Breast epithelium (tissue), 4 donors: ENCODE measurements at regions of chr1 and their contacts with region 1.

Region 1: DNA sequence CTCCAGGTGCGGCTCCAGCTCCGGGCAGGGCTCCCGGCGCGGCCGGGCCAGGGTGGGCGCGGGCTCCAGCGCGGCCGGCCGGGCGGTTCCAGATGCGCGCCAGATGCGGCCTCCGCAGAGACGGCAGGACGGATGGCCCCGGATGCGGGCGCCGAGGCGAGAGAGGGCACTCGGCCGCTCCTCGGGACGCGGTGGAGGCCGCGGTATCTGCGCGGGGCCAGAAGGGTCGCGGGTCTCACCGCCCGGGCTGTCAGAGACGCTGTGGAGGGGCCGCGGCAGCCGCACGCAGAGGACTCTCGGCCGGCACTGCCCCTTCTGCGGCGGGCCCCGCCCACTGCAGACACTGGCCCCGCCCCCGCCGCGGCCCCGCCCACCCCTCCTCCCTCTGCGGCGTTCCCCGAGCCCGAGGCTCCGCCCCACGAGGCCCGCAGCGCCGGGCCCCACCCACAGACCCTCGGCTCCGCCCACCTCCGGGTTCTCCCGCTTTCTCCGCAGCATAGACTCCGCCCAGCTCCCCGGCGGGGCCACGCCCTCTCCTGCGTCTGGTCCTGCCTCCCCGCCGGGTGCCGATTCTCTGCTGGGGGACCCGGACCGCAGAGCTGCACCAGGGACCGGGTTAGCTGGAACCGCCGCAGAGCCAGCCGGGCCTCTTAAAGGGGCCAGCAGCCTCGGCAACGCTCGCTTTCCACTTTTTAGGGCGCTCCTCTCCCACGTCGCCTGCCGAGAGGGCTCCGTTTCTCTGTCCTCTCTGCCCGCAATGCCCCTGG is at the start of gene IFFO2:
- DNase-seq: peak; percentile 97 to 98
- H3K4me3 ChIP-seq: peak within 1 kb of the TSS; percentile 71 to 84 (median 76)
- H3K27ac ChIP-seq: peak within 1 kb of the TSS; percentile 88 to 92
- H3K4me1 ChIP-seq: peaks cover 0 to 18% of the 10 kb centered on the region in 2 donors
- H3K27me3 ChIP-seq: no peaks in the 10 kb centered on the region
- CTCF ChIP-seq: no peak
- POLR2A ChIP-seq: peak; percentile 62
- total RNA-seq, gene IFFO2: 5.8 to 35.3 (median 34.4) TPM

Region 2: GRCh38 chr1:18160290-18160942 is 796.1 kb before region 1 on chr1:
- intact Hi-C with region 1: no loop called
- DNase-seq: peak in 1 of 2 donors; percentile 36
- H3K4me3 ChIP-seq: no peak overlapping the region
- H3K27ac ChIP-seq: no peak overlapping the region
- H3K4me1 ChIP-seq: no peaks in the 10 kb centered on the region
- H3K27me3 ChIP-seq: peaks cover 0 to 15% of the 10 kb centered on the region in 2 donors
- CTCF ChIP-seq: no peak
- POLR2A ChIP-seq: no peak

Region 3: GRCh38 chr1:18902523-18903290 is 53.8 kb before region 1 on chr1 and contains the start of gene ALDH4A1:
- intact Hi-C with region 1: loop called (anchors 5 kb)
- DNase-seq: peak; percentile 98 to 99
- H3K4me3 ChIP-seq: peak within 1 kb of the TSS; percentile 65 to 97 (median 73)
- H3K27ac ChIP-seq: peak within 1 kb of the TSS; percentile 90 to 96
- H3K4me1 ChIP-seq: peaks cover 0 to 7% of the 10 kb centered on the region in 2 donors
- H3K27me3 ChIP-seq: no peaks in the 10 kb centered on the region
- CTCF ChIP-seq: peak in 1 of 3 donors; percentile 19
- POLR2A ChIP-seq: no peak
- total RNA-seq, gene ALDH4A1: 15.7 to 81.0 (median 23.7) TPM

Region 4: DNA sequence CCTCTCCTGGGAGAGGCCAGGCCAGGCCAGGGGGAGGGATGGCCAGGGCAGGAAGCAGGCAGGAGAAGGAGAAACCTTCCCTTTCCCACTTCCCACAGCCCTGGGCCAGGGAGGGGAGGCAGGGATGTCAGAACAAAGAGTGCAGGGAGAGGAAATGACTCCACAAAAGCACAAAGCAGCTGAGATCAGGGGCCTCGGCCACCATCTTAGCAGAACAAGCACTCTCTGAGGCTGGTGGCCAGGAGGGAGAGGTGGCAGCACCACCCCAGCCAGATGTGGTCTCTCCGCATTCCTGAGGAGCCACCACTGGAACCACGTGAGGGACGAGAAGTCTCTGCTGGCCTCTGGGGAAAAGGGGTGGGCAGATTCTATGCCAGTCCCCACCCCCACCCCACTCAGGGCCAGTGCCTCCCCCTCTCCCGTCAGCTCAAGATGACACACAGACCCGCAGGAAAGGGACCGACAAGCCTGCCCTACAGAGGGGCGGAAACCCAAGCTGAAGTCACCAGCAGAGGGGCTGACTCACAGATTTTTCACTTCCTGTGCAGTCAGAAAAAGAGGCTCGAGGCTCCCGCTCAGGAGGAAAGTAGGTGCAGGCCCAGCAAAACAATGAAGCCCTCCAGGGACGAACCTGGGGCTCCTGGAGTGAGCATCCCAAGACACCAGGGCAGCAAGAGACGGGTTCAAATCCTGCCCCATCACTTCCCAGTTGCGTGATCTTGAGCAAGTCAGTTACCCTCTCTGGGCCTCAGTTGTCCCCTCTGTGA is 30.1 kb before region 1 on chr1:
- intact Hi-C with region 1: no loop called
- DNase-seq: peak in 1 of 2 donors; percentile 63
- H3K4me3 ChIP-seq: peak overlapping the region in 2 of 3 donors; percentile 5 to 45
- H3K27ac ChIP-seq: peak overlapping the region; percentile 68 to 89
- H3K4me1 ChIP-seq: peaks cover 25 to 33% of the 10 kb centered on the region in 2 donors
- H3K27me3 ChIP-seq: no peaks in the 10 kb centered on the region
- CTCF ChIP-seq: no peak
- POLR2A ChIP-seq: no peak